ENCODE measurements at regions of chr1 and their contacts with region 1.

Region 1: GRCh38 chr1:35532497-35533223 is 24.5 kb downstream of the KIAA0319L start:
- DNase-seq: no peak
- ATAC-seq: no peak
- H3K4me3 ChIP-seq: no peak overlapping the region
- H3K27ac ChIP-seq: no peak overlapping the region
- H3K4me1 ChIP-seq: peaks cover 4% of the 10 kb centered on the region; the same call in 1 of the 2 replicates
- H3K27me3 ChIP-seq: no peaks in the 10 kb centered on the region
- CTCF ChIP-seq: no peak
- POLR2A ChIP-seq: no peak
- RAD21 ChIP-seq: no peak

Region 2: DNA sequence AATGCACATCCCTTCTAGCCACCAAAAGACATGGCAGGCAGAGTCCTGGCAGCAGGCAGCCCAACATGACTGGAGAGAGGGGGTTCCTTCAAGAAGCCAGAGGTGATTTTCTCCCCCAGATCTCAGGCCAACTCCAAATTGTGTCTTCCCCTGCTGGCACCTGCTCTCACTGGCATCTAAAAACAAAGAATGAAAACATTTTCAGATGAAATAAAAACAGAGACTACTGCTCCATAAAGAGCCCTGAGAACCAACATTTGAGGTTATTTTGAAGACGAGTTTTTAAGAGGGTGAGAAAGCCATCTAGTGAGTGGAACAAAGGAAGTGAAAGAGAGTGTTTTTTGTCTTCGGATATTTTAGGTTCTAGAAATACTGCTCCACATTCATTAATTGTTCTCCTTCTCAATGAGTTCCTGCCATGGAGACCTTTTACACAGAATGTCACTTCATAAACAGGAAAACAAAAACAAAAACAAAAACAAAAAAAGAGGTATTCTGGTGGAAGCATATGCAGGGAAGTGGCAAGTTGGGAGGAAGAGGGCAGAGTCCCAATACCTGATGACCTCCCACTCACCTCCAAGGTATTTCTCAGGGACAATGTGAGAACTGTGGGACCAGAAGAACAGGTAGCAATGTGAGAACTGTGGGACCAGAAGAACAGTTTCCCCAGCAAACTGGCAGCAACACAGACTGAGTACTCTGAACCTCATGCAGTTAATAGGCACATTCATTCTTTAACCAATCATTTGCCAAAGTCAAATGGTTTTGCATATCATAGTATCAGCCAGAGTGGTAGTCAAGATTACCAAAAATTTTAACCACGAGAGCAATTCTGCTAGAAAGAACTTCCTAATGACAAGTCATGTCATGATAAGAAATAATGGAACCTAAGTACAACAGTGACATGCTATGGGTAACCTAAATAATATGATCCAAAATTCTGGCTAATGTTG is 25.4 kb before region 1 on chr1:
- CTCF ChIA-PET with region 1: no interaction called
- POLR2A ChIA-PET with region 1: no interaction called
- dilution Hi-C with region 1: no loop called
- in situ Hi-C with region 1: no loop called
- intact Hi-C with region 1: loop called (anchors 2 kb)
- DNase-seq: no peak
- ATAC-seq: no peak
- H3K4me3 ChIP-seq: no peak overlapping the region
- H3K27ac ChIP-seq: no peak overlapping the region
- H3K4me1 ChIP-seq: peaks cover 9% of the 10 kb centered on the region
- H3K27me3 ChIP-seq: no peaks in the 10 kb centered on the region
- CTCF ChIP-seq: no peak
- POLR2A ChIP-seq: no peak
- RAD21 ChIP-seq: no peak